Esophagus muscularis mucosa (tissue), 4 donors: ENCODE measurements at regions of chr11 and their contacts with region 1.

Region 1: GRCh38 chr11:65764434-65764833 is 16.3 kb downstream of the AP5B1 start:
- DNase-seq: no peak
- H3K4me3 ChIP-seq: no peak overlapping the region
- H3K27ac ChIP-seq: no peak overlapping the region
- H3K4me1 ChIP-seq: peaks cover 0 to under 1% (median 0%) of the 10 kb centered on the region in 4 donors
- H3K27me3 ChIP-seq: no peaks in the 10 kb centered on the region
- CTCF ChIP-seq: no peak
- EP300 ChIP-seq: no peak
- POLR2A ChIP-seq: no peak

Region 2: GRCh38 chr11:65060913-65061408 is 703.5 kb before region 1 on chr11:
- intact Hi-C with region 1: loop called (anchors 10 kb)
- DNase-seq: no peak
- H3K4me3 ChIP-seq: no peak overlapping the region
- H3K27ac ChIP-seq: no peak overlapping the region
- H3K4me1 ChIP-seq: no peaks in the 10 kb centered on the region
- H3K27me3 ChIP-seq: no peaks in the 10 kb centered on the region
- CTCF ChIP-seq: peak in 2 of 3 experiments; percentile 16 to 25
- EP300 ChIP-seq: no peak
- POLR2A ChIP-seq: no peak

Region 3: DNA sequence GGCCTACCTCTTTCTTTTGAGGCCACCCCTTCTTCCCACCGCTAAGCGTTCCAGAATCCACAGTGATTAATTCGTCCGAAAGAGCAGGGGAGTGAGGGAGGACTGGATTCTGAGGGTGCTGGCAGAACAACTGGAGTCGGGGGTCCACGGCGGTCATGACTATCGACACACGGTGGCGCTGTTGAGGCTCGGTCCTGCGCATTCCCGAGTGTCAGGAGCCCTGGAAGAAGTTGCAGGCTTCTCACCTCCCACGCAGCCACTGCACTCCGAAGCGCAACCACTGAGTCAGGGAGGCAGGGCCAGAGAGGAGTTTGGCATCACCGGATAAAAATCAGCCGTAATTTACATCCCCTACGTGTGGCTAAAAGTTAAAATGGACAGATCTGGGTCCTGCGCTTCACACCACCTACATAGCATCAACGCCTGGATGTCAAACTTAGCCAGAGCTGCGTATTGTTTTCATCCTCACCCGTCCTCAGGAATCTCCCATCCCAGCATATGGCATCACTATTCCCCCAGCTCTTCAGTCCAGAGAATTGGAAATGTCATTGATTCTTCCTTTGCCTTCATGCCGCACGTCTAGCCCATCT is 814.7 kb after region 1 on chr11:
- intact Hi-C with region 1: no loop called
- DNase-seq: peak; percentile 95
- H3K4me3 ChIP-seq: no peak overlapping the region
- H3K27ac ChIP-seq: no peak overlapping the region
- H3K4me1 ChIP-seq: peaks cover 0 to 7% (median 6%) of the 10 kb centered on the region in 4 donors
- H3K27me3 ChIP-seq: no peaks in the 10 kb centered on the region
- CTCF ChIP-seq: peak; percentile 85 to 87 (median 86)
- EP300 ChIP-seq: no peak
- POLR2A ChIP-seq: no peak